IMR-90 (cell line): ENCODE measurements at regions of chr16 and their contacts with region 1.

Region 1: DNA sequence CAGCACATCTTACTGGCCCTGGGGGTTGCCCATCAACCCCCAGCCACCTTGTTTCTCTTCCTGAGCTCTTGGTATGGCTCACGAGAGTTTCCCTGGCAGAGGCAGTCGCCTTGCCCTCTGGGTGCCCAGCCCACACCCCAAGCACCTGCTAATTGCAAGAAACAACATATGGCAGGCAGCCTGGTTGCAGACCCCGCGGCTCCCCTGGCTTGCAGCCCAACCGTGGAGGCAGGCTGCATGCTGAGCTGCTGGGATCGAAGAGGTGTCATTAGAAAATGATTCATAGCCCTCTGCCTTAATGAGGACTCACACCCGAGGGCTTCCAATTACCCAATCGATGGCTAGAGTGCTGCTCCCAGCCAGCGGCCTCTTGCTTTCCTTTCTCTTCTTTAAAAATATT is 115.7 kb downstream of the TMEM114 start:
- DNase-seq: no peak
- ATAC-seq: no peak
- H3K4me3 ChIP-seq: no peak overlapping the region
- H3K27ac ChIP-seq: no peak overlapping the region
- H3K4me1 ChIP-seq: no peaks in the 10 kb centered on the region
- H3K27me3 ChIP-seq: no peaks in the 10 kb centered on the region
- CTCF ChIP-seq: no peak
- POLR2A ChIP-seq: no peak
- RAD21 ChIP-seq: no peak

Region 2: GRCh38 chr16:8607214-8607613 is 132.6 kb after region 1 on chr16:
- CTCF ChIA-PET with region 1: interaction called, 11 read pairs
- POLR2A ChIA-PET with region 1: no interaction called
- dilution Hi-C with region 1: no loop called
- in situ Hi-C with region 1: no loop called
- intact Hi-C with region 1: no loop called
- DNase-seq: no peak
- ATAC-seq: no peak
- H3K4me3 ChIP-seq: no peak overlapping the region
- H3K27ac ChIP-seq: no peak overlapping the region
- H3K4me1 ChIP-seq: no peaks in the 10 kb centered on the region; the same call in 1 of the 2 replicates
- H3K27me3 ChIP-seq: peaks cover 1% of the 10 kb centered on the region; the same call in 1 of the 2 replicates
- CTCF ChIP-seq: no peak
- POLR2A ChIP-seq: no peak
- RAD21 ChIP-seq: no peak